ENCODE measurements at regions of chr12 and their contacts with region 1.

Region 1: DNA sequence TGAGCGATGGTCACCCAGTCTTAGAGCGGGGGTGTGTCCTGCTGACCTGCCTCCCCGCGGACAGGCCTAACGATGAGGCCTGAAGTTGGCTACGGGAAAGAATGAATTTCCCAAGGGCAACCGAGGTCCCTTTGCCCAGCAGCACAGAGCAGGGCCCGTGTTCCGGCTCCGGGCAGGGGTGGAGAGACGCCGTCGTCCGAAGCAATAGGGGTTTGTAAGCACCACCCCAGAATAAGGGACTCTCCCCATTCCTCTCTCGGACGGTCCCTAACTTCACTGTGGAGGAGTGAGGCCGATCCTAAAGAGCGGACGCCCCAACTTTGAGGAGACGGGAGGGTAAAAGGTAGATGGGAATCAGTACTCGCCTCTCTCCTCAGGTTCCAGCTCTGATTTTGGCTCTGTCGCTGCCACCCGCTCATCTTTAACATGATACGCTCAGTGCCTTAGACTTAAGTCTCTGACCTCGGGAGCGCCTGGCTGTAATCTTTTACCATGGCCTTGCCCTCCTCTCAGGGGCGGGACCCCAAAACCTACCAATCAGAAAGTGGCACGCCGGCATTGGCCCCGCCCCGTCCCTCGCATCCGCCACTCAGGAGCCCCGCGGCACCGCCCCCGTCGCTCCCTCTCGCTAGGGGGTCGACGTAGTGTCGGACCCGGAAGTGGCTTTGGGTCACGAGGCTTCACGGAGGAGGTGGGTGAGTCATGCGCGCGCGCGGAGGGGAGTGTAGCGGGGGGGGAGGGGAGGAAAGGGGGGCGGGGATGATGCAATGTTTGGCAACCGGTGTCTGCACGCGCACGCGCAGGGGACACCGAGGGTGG is at the start of gene DDIT3:
- DNase-seq: peak; percentile 98 to 99 (median 99)
- ATAC-seq: peak; percentile 89
- H3K4me3 ChIP-seq: peak within 1 kb of the TSS; percentile 100
- H3K4me3 Mint-ChIP-seq: peak within 1 kb of the TSS; percentile 89 to 99 (median 98)
- H3K27ac ChIP-seq: peak within 1 kb of the TSS; percentile 95
- H3K27ac Mint-ChIP-seq: peak within 1 kb of the TSS; percentile 97 to 100 (median 99)
- H3K4me1 ChIP-seq: peaks cover 32 to 41% of the 10 kb centered on the region in 2 donors
- H3K4me1 Mint-ChIP-seq: peaks cover 47 to 80% (median 56%) of the 10 kb centered on the region in 7 donors
- H3K27me3 ChIP-seq: no peaks in the 10 kb centered on the region
- H3K27me3 Mint-ChIP-seq: peaks cover 0 to 7% (median 0%) of the 10 kb centered on the region in 5 donors
- total RNA-seq, gene DDIT3: 19.6 to 124 (median 51.6) TPM

Region 2: GRCh38 chr12:56897844-56898361 is 622.4 kb before region 1 on chr12:
- CTCF ChIA-PET with region 1: no interaction called
- POLR2A ChIA-PET with region 1: no interaction called
- intact Hi-C with region 1: no loop called
- DNase-seq: no peak
- ATAC-seq: no peak
- H3K4me3 ChIP-seq: no peak overlapping the region
- H3K4me3 Mint-ChIP-seq: no peak overlapping the region
- H3K27ac ChIP-seq: no peak overlapping the region
- H3K27ac Mint-ChIP-seq: no peak overlapping the region
- H3K4me1 ChIP-seq: no peaks in the 10 kb centered on the region
- H3K4me1 Mint-ChIP-seq: no peaks in the 10 kb centered on the region
- H3K27me3 ChIP-seq: no peaks in the 10 kb centered on the region
- H3K27me3 Mint-ChIP-seq: peaks cover 0 to 22% (median 9%) of the 10 kb centered on the region in 5 donors

Region 3: DNA sequence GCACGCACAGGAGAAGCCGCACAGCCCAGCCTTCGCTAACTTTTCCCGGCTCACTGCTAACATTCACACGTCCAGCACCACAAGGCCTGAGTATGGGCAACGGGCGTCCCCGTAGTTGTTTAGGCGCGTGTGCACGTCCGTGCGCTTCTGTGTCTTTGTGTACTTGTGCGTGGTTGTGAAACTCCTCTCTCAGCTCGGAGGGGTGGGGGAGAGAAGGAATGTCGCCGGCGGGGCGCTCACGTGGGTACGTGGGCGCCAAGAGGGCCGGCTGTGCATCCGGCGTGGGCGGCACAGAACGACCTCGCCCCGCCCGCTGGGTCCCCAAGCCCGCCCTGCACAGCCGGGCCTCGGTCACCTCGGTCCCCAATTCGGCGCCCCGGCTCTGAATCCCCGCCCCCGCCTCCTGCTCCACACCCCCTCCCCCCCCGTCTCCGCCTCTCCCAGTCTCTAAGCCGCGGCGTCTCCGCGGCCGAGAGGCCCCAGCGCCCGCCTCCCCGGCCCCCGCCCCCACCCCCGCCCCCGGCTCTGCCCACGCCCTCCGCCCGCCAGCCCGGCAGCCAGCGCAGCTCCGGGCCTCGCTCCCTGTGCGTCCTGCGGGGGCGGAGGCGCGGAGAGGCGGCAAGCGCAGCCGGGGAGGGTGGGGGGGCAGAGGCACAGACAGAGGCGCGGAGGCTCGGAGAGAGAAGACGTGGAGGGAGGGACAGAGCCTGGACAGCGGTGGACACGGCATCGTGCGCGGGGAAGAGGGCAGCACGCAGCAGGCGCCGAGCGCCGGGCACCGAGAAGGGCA is 431.6 kb before region 1 on chr12 and contains the start of gene NAB2:
- CTCF ChIA-PET with region 1: no interaction called
- POLR2A ChIA-PET with region 1: no interaction called
- intact Hi-C with region 1: loop called (anchors 2 to 5 kb)
- DNase-seq: peak; percentile 79 to 91 (median 88)
- ATAC-seq: peak; percentile 84
- H3K4me3 ChIP-seq: peak within 1 kb of the TSS; percentile 94
- H3K4me3 Mint-ChIP-seq: peak within 1 kb of the TSS; percentile 94 to 98 (median 96)
- H3K27ac ChIP-seq: peak within 1 kb of the TSS; percentile 100
- H3K27ac Mint-ChIP-seq: peak within 1 kb of the TSS; percentile 94 to 99 (median 97)
- H3K4me1 ChIP-seq: peaks cover 23 to 46% of the 10 kb centered on the region in 2 donors
- H3K4me1 Mint-ChIP-seq: peaks cover 40 to 68% (median 58%) of the 10 kb centered on the region in 7 donors
- H3K27me3 ChIP-seq: no peaks in the 10 kb centered on the region
- H3K27me3 Mint-ChIP-seq: no peaks in the 10 kb centered on the region
- total RNA-seq, gene NAB2: 5.7 to 22.4 (median 15.5) TPM

Region 4: GRCh38 chr12:57487597-57488401 is 32.5 kb before region 1 on chr12 and contains the start of gene MARS1:
- CTCF ChIA-PET with region 1: no interaction called
- POLR2A ChIA-PET with region 1: interaction called, 7 read pairs
- intact Hi-C with region 1: loop called (anchors 1 kb)
- DNase-seq: peak; percentile 71 to 95 (median 93)
- ATAC-seq: peak; percentile 99
- H3K4me3 ChIP-seq: peak within 1 kb of the TSS; percentile 89
- H3K4me3 Mint-ChIP-seq: peak within 1 kb of the TSS; percentile 89 to 100 (median 98)
- H3K27ac ChIP-seq: peak within 1 kb of the TSS; percentile 86
- H3K27ac Mint-ChIP-seq: peak within 1 kb of the TSS; percentile 86 to 99 (median 96)
- H3K4me1 ChIP-seq: peaks cover 17 to 21% of the 10 kb centered on the region in 2 donors
- H3K4me1 Mint-ChIP-seq: peaks cover 21 to 48% (median 40%) of the 10 kb centered on the region in 7 donors
- H3K27me3 ChIP-seq: no peaks in the 10 kb centered on the region
- H3K27me3 Mint-ChIP-seq: peaks cover 0 to 2% (median 0%) of the 10 kb centered on the region in 5 donors
- total RNA-seq, gene MARS1: 178 to 229 (median 197) TPM

Region 5: GRCh38 chr12:57590536-57591479 is 70.5 kb after region 1 on chr12 and contains the start of gene PIP4K2C:
- CTCF ChIA-PET with region 1: interaction called, 3 read pairs
- POLR2A ChIA-PET with region 1: interaction called, 4 read pairs
- intact Hi-C with region 1: loop called in 1 of 2 experiments (anchors 1 kb)
- DNase-seq: peak; percentile 49 to 79 (median 65)
- ATAC-seq: peak; percentile 95
- H3K4me3 ChIP-seq: peak within 1 kb of the TSS; percentile 83
- H3K4me3 Mint-ChIP-seq: peak within 1 kb of the TSS; percentile 84 to 92 (median 89)
- H3K27ac ChIP-seq: peak within 1 kb of the TSS; percentile 76
- H3K27ac Mint-ChIP-seq: peak within 1 kb of the TSS; percentile 79 to 94 (median 91)
- H3K4me1 ChIP-seq: peaks cover 14 to 21% of the 10 kb centered on the region in 2 donors
- H3K4me1 Mint-ChIP-seq: peaks cover 24 to 35% (median 26%) of the 10 kb centered on the region in 7 donors
- H3K27me3 ChIP-seq: no peaks in the 10 kb centered on the region
- H3K27me3 Mint-ChIP-seq: peaks cover 0 to 3% (median 0%) of the 10 kb centered on the region in 5 donors
- total RNA-seq, gene PIP4K2C: 20.1 to 29.7 (median 21.9) TPM

Region 6: DNA sequence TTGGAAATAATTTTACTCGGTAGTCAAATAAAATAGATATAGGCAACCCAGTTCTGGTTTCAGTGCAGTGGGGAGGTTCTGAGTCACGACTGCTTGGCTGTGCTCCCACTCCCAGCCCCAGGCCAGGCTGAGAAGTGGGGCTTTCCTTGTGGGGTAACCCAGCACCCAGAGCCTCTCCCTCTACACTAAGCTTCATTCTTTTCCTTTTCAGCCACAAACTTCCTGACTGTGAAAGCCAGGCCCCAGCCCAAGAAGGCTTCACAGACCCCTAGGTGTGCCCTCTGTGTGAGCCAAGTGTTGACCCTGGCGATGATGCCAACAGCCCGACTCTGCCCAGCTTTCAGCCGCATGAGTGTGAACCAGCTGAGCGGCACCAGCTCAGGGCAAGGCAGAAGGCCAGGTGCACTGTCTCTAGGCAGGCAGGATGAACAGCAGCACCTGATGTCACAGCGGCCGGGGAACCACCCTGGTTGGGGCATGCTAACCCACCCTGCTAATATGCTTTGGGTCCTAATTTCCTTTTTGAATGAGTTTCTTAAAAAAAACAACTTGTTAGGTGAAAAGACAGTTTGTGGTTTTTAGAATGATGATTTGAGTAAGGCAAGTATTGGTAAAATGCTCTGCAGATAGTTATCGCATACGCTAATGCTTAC is 378.9 kb after region 1 on chr12:
- CTCF ChIA-PET with region 1: no interaction called
- POLR2A ChIA-PET with region 1: no interaction called
- intact Hi-C with region 1: loop called in 1 of 2 experiments (anchors 2 kb)
- DNase-seq: peak; percentile 41 to 79 (median 53)
- ATAC-seq: peak; percentile 91
- H3K4me3 ChIP-seq: no peak overlapping the region
- H3K4me3 Mint-ChIP-seq: peak overlapping the region; percentile 53 to 88 (median 82)
- H3K27ac ChIP-seq: peak overlapping the region; percentile 66
- H3K27ac Mint-ChIP-seq: peak overlapping the region; percentile 86 to 98 (median 96)
- H3K4me1 ChIP-seq: peaks cover 34 to 49% of the 10 kb centered on the region in 2 donors
- H3K4me1 Mint-ChIP-seq: peaks cover 29 to 60% (median 55%) of the 10 kb centered on the region in 7 donors
- H3K27me3 ChIP-seq: no peaks in the 10 kb centered on the region
- H3K27me3 Mint-ChIP-seq: peaks cover 0 to 2% (median 0%) of the 10 kb centered on the region in 5 donors